ENCODE measurements at regions of chr6 and their contacts with region 1.

Region 1: DNA sequence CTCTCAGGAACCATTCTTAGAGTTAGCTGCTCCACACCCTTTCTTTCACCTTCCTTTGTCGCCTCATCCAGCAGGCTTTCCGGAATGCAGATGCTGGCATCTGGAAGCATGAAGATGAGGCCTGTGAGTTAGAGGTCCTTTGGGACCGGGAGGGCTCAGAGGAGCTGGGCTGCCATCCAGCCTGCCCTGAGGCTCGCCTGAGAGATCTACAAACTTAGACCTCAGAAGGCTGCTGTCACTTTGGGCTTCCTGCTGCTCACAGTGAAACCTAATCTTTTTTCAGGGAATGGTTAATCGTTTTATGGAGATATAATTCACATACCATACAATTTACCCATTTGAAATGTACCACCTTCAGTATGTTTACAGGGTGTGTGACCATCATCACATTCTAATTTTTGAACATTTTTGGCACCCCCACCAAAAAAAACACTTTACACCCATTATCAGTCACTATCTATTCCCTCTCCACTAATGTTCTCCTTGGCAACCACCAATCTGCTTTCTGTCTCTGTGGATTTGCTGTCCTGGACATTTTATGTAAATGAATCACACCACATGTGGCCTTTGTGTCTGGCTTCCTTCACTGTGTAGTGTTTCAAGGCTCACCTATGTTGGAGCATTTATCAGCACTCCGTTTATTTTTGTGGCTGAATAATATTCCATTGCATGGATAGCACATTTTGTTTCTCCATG is 20.0 kb upstream of the MPC1 start:
- DNase-seq: peak; percentile 29
- ATAC-seq: no peak
- H3K4me3 Mint-ChIP-seq: no peak overlapping the region
- H3K27ac Mint-ChIP-seq: no peak overlapping the region
- H3K4me1 Mint-ChIP-seq: no peaks in the 10 kb centered on the region
- H3K27me3 Mint-ChIP-seq: peaks cover 7% of the 10 kb centered on the region

Region 2: GRCh38 chr6:166275714-166276166 is 127.0 kb before region 1 on chr6:
- CTCF ChIA-PET with region 1: interaction called, 28 read pairs
- DNase-seq: peak; percentile 81
- ATAC-seq: peak; percentile 93
- H3K4me3 Mint-ChIP-seq: no peak overlapping the region
- H3K27ac Mint-ChIP-seq: no peak overlapping the region
- H3K4me1 Mint-ChIP-seq: peaks cover 7% of the 10 kb centered on the region
- H3K27me3 Mint-ChIP-seq: peaks cover 21% of the 10 kb centered on the region

Region 3: GRCh38 chr6:166313255-166314070 is 89.3 kb before region 1 on chr6:
- CTCF ChIA-PET with region 1: interaction called, 82 read pairs
- DNase-seq: peak; percentile 71
- ATAC-seq: peak; percentile 91
- H3K4me3 Mint-ChIP-seq: no peak overlapping the region
- H3K27ac Mint-ChIP-seq: no peak overlapping the region
- H3K4me1 Mint-ChIP-seq: no peaks in the 10 kb centered on the region
- H3K27me3 Mint-ChIP-seq: peaks cover 32% of the 10 kb centered on the region

Region 4: GRCh38 chr6:166318649-166319600 is 83.8 kb before region 1 on chr6:
- CTCF ChIA-PET with region 1: interaction called, 82 read pairs
- DNase-seq: no peak
- ATAC-seq: no peak
- H3K4me3 Mint-ChIP-seq: no peak overlapping the region
- H3K27ac Mint-ChIP-seq: no peak overlapping the region
- H3K4me1 Mint-ChIP-seq: no peaks in the 10 kb centered on the region
- H3K27me3 Mint-ChIP-seq: no peaks in the 10 kb centered on the region

Measured in activated CD8-positive, alpha-beta memory T cell treated with anti-CD3 and anti-CD28 coated beads, Interleukin-2, amount 10 ng/mL, durations not matched to agents 7 days and 5 days (primary cell).